ENCODE measurements at regions of chrX and their contacts with region 1.

Region 1: DNA sequence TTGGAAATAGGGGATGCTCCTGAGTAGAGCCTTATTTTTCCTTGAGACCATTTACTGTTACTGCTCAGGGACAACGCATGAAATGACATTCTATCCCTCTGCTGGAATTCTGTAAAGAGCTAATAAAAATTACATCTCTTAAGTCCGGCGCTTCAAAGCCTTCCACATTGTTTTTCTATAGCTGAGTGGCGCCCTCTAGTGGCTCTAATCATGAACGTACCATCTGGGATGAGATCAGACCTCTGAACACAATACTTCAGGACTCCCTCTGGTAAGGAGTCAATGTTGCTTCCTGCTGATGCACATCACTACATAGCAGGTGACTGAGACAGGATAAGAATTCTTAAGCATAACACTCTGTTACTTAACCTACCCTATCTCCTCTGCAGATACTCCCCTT is 6.0 kb downstream of the HMGN5 start:
- DNase-seq: peak; percentile 32
- CTCF ChIP-seq: peak; percentile 75

Region 2: DNA sequence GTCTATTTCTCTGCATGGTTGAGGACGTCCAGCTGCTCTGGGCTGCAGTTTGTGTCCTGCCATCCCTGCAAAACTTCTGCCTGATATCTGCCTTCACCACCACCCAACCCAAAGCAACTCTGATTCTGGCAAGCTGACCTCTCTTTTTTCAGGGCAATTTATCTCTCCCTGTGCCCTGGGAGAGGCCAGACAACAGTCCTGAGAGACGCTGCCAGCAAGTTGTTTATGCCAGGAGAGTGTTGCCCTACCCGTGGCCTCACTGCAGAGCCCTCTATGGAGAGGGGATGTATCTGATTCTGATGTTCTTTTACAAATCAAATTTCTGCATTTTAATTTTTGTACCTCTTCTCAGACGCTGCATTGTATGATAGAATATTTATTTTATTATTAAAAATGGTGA is 349.5 kb before region 1 on chrX:
- in situ Hi-C with region 1: no loop called
- DNase-seq: no peak
- CTCF ChIP-seq: no peak

Region 3: DNA sequence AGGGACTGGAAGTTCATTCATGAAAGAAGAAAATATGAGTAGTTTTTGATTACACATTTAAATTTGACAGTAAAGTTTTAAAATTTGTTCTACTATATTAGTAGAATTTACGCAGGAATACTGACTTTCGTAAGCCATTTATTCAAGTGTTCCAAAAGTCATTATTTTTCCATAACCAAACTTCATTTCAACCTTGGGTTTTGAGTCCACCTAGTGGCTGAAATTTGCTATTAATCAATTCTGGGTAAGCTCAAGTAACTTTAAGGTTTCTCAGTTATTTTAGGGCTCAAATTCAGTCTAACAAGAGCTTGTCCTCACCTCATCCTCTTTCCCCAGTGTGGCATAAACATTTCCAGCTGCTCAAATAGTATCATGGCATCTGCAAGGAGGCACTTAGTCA is 181.6 kb after region 1 on chrX:
- in situ Hi-C with region 1: loop called (anchors 25 kb)
- DNase-seq: peak; percentile 10
- CTCF ChIP-seq: peak; percentile 47